AG04450 (cell line): ENCODE measurements at regions of chr1 and their contacts with region 1.

Region 1: DNA sequence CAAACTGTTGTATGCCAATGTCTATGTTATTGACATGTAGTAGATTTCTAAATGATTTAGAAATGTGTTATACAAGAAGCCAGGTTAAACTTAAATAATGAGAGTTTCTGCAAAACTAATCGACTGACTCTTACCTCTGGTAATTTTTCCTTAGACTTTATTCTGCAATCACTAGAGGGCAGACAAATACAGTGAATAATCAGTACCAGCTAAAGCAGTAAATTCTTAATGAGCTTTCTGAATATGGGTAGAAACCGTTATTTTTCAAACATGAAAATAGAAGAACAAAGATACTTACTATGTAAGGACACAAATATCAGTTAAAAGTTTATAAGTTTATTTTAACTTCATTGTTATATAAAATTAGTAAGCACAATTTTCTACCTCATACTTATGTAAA is 97.9 kb upstream of the RGS1 start:
- DNase-seq: no peak
- H3K4me3 ChIP-seq: no peak overlapping the region
- H3K27ac ChIP-seq: no peak overlapping the region
- H3K27me3 ChIP-seq: no peaks in the 10 kb centered on the region
- CTCF ChIP-seq: peak; percentile 63

Region 2: GRCh38 chr1:192459467-192459866 is 18.2 kb before region 1 on chr1:
- CTCF ChIA-PET with region 1: interaction called, 11 read pairs
- POLR2A ChIA-PET with region 1: no interaction called
- DNase-seq: no peak
- H3K4me3 ChIP-seq: no peak overlapping the region
- H3K27ac ChIP-seq: no peak overlapping the region
- H3K27me3 ChIP-seq: no peaks in the 10 kb centered on the region
- CTCF ChIP-seq: no peak

Region 3: GRCh38 chr1:192506741-192507155 is 29.1 kb after region 1 on chr1:
- CTCF ChIA-PET with region 1: no interaction called
- POLR2A ChIA-PET with region 1: no interaction called
- DNase-seq: no peak
- H3K4me3 ChIP-seq: no peak overlapping the region
- H3K27ac ChIP-seq: no peak overlapping the region
- H3K27me3 ChIP-seq: no peaks in the 10 kb centered on the region
- CTCF ChIP-seq: peak; percentile 53

Region 4: GRCh38 chr1:192580351-192580962 is 102.8 kb after region 1 on chr1:
- CTCF ChIA-PET with region 1: interaction called, 23 read pairs
- POLR2A ChIA-PET with region 1: no interaction called
- DNase-seq: no peak
- H3K4me3 ChIP-seq: no peak overlapping the region
- H3K27ac ChIP-seq: no peak overlapping the region
- H3K27me3 ChIP-seq: no peaks in the 10 kb centered on the region
- CTCF ChIP-seq: peak; percentile 51

Region 5: GRCh38 chr1:192609110-192610079 is 131.8 kb after region 1 on chr1:
- CTCF ChIA-PET with region 1: interaction called, 42 read pairs
- POLR2A ChIA-PET with region 1: no interaction called
- DNase-seq: no peak
- H3K4me3 ChIP-seq: no peak overlapping the region
- H3K27ac ChIP-seq: no peak overlapping the region
- H3K27me3 ChIP-seq: no peaks in the 10 kb centered on the region
- CTCF ChIP-seq: no peak

Region 6: GRCh38 chr1:192808518-192809306 is 331.1 kb after region 1 on chr1 and contains the start of gene RGS2:
- CTCF ChIA-PET with region 1: interaction called, 28 read pairs
- POLR2A ChIA-PET with region 1: interaction called, 3 read pairs
- DNase-seq: peak; percentile 92
- H3K4me3 ChIP-seq: peak within 1 kb of the TSS; percentile 93
- H3K27ac ChIP-seq: peak within 1 kb of the TSS; percentile 59
- H3K27me3 ChIP-seq: no peaks in the 10 kb centered on the region
- CTCF ChIP-seq: no peak
- polyA plus RNA-seq, gene RGS2: 60.5 and 80.3 TPM in 2 replicates

Region 7: DNA sequence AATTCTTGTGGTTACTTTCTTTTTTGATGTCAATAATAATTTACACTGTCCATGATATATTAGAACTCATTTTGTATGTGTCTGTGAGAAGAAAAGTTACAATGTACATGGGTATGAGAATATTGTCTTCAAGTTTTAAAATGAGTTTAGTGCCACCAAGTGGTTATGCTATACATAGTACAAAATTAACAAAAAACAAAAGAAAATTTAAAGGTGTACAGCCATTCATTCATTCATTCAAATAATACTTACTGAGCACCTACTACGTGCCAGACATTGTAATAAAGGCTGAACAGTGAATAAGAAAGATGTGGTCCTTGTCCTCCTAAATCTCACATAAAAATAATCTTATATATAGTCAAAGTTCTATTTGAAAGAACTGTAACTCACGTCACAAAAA is 553.8 kb after region 1 on chr1:
- CTCF ChIA-PET with region 1: interaction called, 17 read pairs
- POLR2A ChIA-PET with region 1: no interaction called
- DNase-seq: no peak
- H3K4me3 ChIP-seq: no peak overlapping the region
- H3K27ac ChIP-seq: no peak overlapping the region
- H3K27me3 ChIP-seq: no peaks in the 10 kb centered on the region
- CTCF ChIP-seq: peak; percentile 40